Calu3 (cell line): ENCODE measurements at regions of chr3 and their contacts with region 1.

Region 1: DNA sequence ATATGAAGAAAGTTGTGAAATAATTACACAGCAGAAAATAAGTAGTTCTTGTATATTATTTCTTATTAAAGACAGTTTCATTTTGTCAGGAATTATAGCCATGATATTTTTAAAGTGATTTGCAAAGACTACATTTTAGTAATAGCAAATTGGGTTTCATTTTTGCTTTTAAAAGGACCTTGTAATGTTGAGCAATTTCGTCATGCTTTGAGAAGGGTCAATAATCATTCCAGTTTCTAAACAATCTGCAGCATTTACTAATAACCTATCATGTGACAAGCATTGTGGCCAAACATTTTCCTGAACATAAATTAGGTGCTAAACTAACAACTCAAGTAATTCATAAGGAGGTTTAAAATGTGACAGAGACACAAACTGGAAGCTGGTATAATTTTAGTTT is 214.4 kb upstream of the CBLB start:
- DNase-seq: no peak
- H3K4me3 Mint-ChIP-seq: no peak overlapping the region
- H3K27ac Mint-ChIP-seq: no peak overlapping the region
- H3K4me1 Mint-ChIP-seq: peaks cover 10% of the 10 kb centered on the region
- H3K27me3 Mint-ChIP-seq: no peaks in the 10 kb centered on the region
- CTCF ChIP-seq: no peak

Region 2: DNA sequence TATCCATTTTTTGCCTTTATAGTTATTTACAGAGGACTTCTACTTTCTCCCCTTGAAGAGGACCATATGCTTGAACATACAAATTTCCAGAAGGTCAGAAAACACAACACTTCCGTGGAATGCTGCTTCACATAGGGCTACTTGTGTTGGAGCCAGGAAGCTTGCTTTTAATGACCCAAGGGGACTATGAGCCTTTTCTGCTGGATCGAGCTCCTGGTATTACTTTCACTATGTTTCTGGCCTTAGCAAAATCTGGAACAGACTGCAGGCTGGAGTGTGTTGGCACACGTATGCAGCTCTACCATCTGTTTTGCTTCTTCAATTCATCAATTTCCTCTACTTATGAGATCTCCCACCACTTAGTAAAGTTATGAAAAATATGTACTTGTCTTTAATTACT is 145.1 kb before region 1 on chr3:
- CTCF ChIA-PET with region 1: no interaction called
- intact Hi-C with region 1: loop called (anchors 10 kb)
- DNase-seq: no peak
- H3K4me3 Mint-ChIP-seq: no peak overlapping the region
- H3K27ac Mint-ChIP-seq: no peak overlapping the region
- H3K4me1 Mint-ChIP-seq: no peaks in the 10 kb centered on the region
- H3K27me3 Mint-ChIP-seq: no peaks in the 10 kb centered on the region
- CTCF ChIP-seq: no peak

Region 3: DNA sequence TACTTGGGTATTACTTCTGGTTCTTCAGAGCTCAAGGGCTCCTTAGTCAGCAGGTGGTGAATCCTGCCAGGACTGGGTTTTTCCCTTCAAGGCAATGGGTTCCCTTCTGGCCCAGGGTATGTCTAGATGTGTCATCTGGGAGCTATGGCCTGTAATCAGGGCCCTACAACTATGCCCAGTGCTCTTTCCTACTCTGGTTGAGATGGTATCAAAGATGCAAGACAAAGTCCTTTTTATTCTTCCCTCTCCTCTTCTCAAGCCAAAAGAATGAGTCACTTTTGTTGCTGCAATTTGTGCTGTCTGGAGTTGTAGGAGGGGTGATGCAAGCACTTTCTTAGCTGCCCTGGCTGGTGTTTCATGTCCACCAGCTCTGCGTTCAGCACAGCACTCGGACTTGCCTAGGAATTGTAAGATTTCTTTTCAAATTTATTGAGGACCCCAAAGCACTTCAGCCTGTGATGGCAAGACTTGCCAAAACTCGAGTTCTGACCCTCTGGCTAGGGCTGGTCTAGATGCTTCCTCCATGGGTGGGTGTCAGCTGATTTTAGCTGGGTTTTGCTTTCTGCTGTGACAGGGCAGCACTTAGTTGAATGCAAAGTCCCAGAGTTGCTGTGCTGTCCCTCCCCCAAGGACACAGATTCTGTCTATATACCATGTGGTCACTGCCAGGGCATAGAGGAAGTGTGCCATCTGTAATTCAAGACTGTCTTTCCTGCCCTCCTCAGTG is 85.2 kb before region 1 on chr3:
- CTCF ChIA-PET with region 1: interaction called, 17 read pairs
- intact Hi-C with region 1: no loop called
- DNase-seq: peak; percentile 59
- H3K4me3 Mint-ChIP-seq: peak overlapping the region; percentile 45
- H3K27ac Mint-ChIP-seq: peak overlapping the region; percentile 88
- H3K4me1 Mint-ChIP-seq: no peaks in the 10 kb centered on the region
- H3K27me3 Mint-ChIP-seq: no peaks in the 10 kb centered on the region
- CTCF ChIP-seq: no peak

Region 4: DNA sequence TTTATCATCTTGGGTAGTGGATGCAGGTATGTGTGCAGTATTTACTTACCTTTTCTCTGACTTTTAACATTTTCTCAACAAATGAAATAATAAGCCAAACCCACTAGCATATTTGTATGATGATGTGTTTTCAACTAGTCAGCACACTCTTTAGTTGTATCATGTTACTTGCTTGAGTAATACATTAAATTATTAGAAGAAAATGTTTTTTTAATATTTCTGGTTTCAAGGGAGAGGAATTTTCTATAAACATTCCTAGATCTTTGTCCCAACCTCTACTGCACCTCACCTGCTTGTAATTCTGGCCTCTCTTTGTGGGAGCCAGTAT is 52.6 kb before region 1 on chr3:
- CTCF ChIA-PET with region 1: no interaction called
- intact Hi-C with region 1: no loop called
- DNase-seq: no peak
- H3K4me3 Mint-ChIP-seq: no peak overlapping the region
- H3K27ac Mint-ChIP-seq: no peak overlapping the region
- H3K4me1 Mint-ChIP-seq: peaks cover 33% of the 10 kb centered on the region
- H3K27me3 Mint-ChIP-seq: no peaks in the 10 kb centered on the region
- CTCF ChIP-seq: no peak